ENCODE measurements at regions of chr22 and their contacts with region 1.

Region 1: GRCh38 chr22:50498322-50498890 is 9.1 kb downstream of the LMF2 start:
- DNase-seq: peak; percentile 67 to 72
- H3K4me3 ChIP-seq: peak overlapping the region; percentile 22; the same call in 1 of the 2 replicates
- H3K27ac ChIP-seq: no peak overlapping the region
- H3K4me1 ChIP-seq: peaks cover 12% of the 10 kb centered on the region
- H3K27me3 ChIP-seq: no peaks in the 10 kb centered on the region
- CTCF ChIP-seq: peak; percentile 88

Region 2: GRCh38 chr22:50010676-50011446 is 487.5 kb before region 1 on chr22:
- CTCF ChIA-PET with region 1: no interaction called
- POLR2A ChIA-PET with region 1: interaction called, 10 read pairs
- intact Hi-C with region 1: no loop called
- DNase-seq: no peak
- H3K4me3 ChIP-seq: no peak overlapping the region
- H3K27ac ChIP-seq: no peak overlapping the region
- H3K4me1 ChIP-seq: peaks cover 18% of the 10 kb centered on the region; the same call in 1 of the 2 replicates
- H3K27me3 ChIP-seq: peaks cover 23% of the 10 kb centered on the region
- CTCF ChIP-seq: no peak

Region 3: GRCh38 chr22:50444663-50445062 is 53.7 kb before region 1 on chr22:
- CTCF ChIA-PET with region 1: interaction called, 18 read pairs
- POLR2A ChIA-PET with region 1: no interaction called
- intact Hi-C with region 1: loop called (anchors 5 kb)
- DNase-seq: peak; percentile 44 to 77
- H3K4me3 ChIP-seq: no peak overlapping the region
- H3K27ac ChIP-seq: no peak overlapping the region
- H3K4me1 ChIP-seq: peaks cover 14% of the 10 kb centered on the region
- H3K27me3 ChIP-seq: no peaks in the 10 kb centered on the region
- CTCF ChIP-seq: no peak

Region 4: GRCh38 chr22:50525390-50526068 is 27.1 kb after region 1 on chr22 and contains the start of gene SCO2:
- CTCF ChIA-PET with region 1: interaction called, 14 read pairs
- POLR2A ChIA-PET with region 1: no interaction called
- intact Hi-C with region 1: no loop called
- DNase-seq: peak; percentile 94 to 97
- H3K4me3 ChIP-seq: peak within 1 kb of the TSS; percentile 96
- H3K27ac ChIP-seq: peak within 1 kb of the TSS; percentile 56
- H3K4me1 ChIP-seq: peaks cover 23% of the 10 kb centered on the region
- H3K27me3 ChIP-seq: no peaks in the 10 kb centered on the region
- CTCF ChIP-seq: peak; percentile 31; the same call in 1 of the 2 replicates
- total RNA-seq, gene SCO2: 3.0 and 6.1 TPM in 2 replicates

Region 5: GRCh38 chr22:50620593-50621355 is 122.4 kb after region 1 on chr22:
- CTCF ChIA-PET with region 1: interaction called, 12 read pairs
- POLR2A ChIA-PET with region 1: no interaction called
- intact Hi-C with region 1: no loop called
- DNase-seq: no peak
- H3K4me3 ChIP-seq: peak overlapping the region; percentile 38; the same call in 1 of the 2 replicates
- H3K27ac ChIP-seq: no peak overlapping the region
- H3K4me1 ChIP-seq: peaks cover 31% of the 10 kb centered on the region
- H3K27me3 ChIP-seq: no peaks in the 10 kb centered on the region
- CTCF ChIP-seq: peak; percentile 96

Measured in PC-9 (cell line).